ENCODE measurements at regions of chr6 and their contacts with region 1.

Region 1: GRCh38 chr6:40543146-40543545 is 44.0 kb downstream of the LRFN2 start:
- DNase-seq: no peak
- H3K4me3 ChIP-seq: no peak overlapping the region
- H3K27ac ChIP-seq: peak overlapping the region; percentile 44
- H3K4me1 ChIP-seq: peaks cover 18% of the 10 kb centered on the region
- H3K27me3 ChIP-seq: no peaks in the 10 kb centered on the region
- CTCF ChIP-seq: no peak
- POLR2A ChIP-seq: no peak

Region 2: GRCh38 chr6:39923414-39923813 is 619.7 kb before region 1 on chr6:
- CTCF ChIA-PET with region 1: no interaction called
- POLR2A ChIA-PET with region 1: no interaction called
- dilution Hi-C with region 1: no loop called
- intact Hi-C with region 1: no loop called
- DNase-seq: no peak
- H3K4me3 ChIP-seq: no peak overlapping the region
- H3K27ac ChIP-seq: no peak overlapping the region
- H3K4me1 ChIP-seq: no peaks in the 10 kb centered on the region
- H3K27me3 ChIP-seq: no peaks in the 10 kb centered on the region
- CTCF ChIP-seq: no peak
- POLR2A ChIP-seq: no peak

Region 3: DNA sequence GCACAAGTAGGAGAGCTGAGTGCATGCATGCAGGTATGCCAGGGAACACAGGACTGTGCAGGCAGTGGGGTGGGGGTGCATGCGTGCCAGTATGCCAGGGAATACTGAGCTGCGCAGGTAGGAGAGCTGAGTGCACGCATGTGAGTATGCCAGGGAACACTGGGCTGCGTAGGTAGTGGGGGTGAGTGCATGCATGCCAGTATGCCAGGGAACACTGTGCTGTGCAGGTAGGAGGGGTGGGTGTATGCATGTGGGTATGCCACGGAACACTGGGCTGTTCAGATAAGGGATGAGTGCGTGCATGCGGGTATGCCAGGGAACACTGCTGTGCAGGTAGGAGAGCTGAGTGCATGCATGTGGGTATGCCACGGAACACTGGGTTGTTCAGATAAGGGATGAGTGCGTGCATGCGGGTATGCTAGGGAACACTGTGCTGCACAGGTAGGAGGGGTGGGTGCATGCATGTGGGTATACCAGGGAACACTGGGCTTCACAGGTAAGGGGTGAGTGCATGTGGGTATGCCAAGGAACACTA is 33.4 kb before region 1 on chr6:
- CTCF ChIA-PET with region 1: no interaction called
- POLR2A ChIA-PET with region 1: no interaction called
- dilution Hi-C with region 1: no loop called
- intact Hi-C with region 1: loop called (anchors 1 kb)
- DNase-seq: no peak
- H3K4me3 ChIP-seq: no peak overlapping the region
- H3K27ac ChIP-seq: no peak overlapping the region
- H3K4me1 ChIP-seq: peaks cover 2% of the 10 kb centered on the region
- H3K27me3 ChIP-seq: no peaks in the 10 kb centered on the region
- CTCF ChIP-seq: no peak
- POLR2A ChIP-seq: no peak

Measured in endothelial cell of umbilical vein (primary cell).